Left ventricle myocardium inferior (tissue), 1 donor: ENCODE measurements at regions of chr10 and their contacts with region 1.

Region 1: GRCh38 chr10:124530215-124530665 is 68.6 kb downstream of the LHPP start:
- DNase-seq: peak; percentile 87
- H3K4me3 ChIP-seq: no peak overlapping the region
- H3K27ac ChIP-seq: no peak overlapping the region
- H3K4me1 ChIP-seq: peaks cover 8% of the 10 kb centered on the region
- H3K27me3 ChIP-seq: no peaks in the 10 kb centered on the region
- CTCF ChIP-seq: peak; percentile 93

Region 2: DNA sequence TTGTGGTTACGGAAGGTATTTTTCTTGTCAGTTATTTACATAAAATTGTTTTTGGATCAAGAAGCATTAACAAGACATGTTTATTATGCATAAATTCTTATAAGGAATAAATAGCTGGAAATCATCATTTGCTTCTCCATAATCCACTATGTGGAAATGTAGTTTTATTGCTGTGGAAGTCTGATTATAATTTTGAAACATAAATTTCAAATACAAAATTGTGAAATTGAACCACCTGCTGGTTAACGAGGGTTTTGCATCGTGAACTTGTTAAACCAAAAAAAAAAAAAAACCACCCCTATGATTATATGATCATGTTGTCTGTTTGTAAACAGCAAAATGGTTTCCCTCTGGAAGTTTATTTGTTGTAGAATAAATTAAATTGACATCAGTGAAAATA is 297.2 kb after region 1 on chr10:
- intact Hi-C with region 1: loop called (anchors 10 kb)
- DNase-seq: no peak
- H3K4me3 ChIP-seq: no peak overlapping the region
- H3K27ac ChIP-seq: no peak overlapping the region
- H3K4me1 ChIP-seq: no peaks in the 10 kb centered on the region
- H3K27me3 ChIP-seq: no peaks in the 10 kb centered on the region
- CTCF ChIP-seq: peak; percentile 67